Activated naive CD4-positive, alpha-beta T cell treated with anti-CD3 and anti-CD28 coated beads, Interleukin-2, amount 10 ng/mL, durations not matched to agents 7 days and 5 days (primary cell): ENCODE measurements at regions of chr1 and their contacts with region 1.

Region 1: DNA sequence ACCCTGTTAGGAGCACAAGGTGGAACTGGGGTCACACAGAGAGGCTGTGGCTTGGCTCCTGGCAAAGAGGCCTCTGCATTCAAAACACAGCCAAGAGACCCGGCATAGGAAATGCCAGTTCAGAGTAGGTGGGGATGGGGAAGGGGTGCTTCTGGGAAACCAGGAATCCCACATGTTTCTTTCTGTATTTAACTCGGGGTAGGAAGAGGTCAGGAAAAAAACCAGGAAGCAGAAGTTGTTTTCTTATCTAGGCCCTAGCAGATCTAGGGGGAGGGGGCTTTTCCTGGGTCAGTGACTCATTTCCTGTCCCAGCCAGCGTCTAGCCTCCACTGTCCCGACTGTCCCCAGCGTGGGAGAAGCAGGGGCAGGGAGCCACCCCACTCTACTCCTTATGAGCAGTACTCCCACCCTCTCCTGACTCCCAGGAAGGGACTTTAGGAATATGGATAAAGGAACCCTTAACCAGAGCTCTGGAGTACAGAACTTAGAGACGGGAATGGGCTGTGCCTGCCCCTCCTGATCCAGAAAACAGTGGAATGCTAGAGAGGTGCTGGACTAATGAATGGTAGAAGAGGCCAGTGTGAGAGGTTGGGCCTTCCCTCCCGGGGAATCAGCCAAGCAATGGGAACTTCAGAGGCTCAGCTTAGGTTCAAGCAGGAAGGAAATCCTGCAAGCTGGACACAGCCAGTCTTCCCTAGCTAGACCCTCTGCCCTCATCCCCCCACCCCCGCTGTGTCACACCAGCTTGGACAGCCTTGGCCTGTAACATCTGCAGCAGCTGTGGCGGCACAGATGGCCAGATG is 5.7 kb downstream of the FHL3 start:
- DNase-seq: no peak
- H3K4me3 Mint-ChIP-seq: no peak overlapping the region
- H3K27ac Mint-ChIP-seq: peak overlapping the region; percentile 80
- H3K4me1 Mint-ChIP-seq: peaks cover 50% of the 10 kb centered on the region
- H3K27me3 Mint-ChIP-seq: peaks cover 16% of the 10 kb centered on the region

Region 2: GRCh38 chr1:38012363-38013226 is 13.0 kb after region 1 on chr1 and contains the start of gene UTP11:
- CTCF ChIA-PET with region 1: interaction called, 17 read pairs
- DNase-seq: peak; percentile 95
- H3K4me3 Mint-ChIP-seq: peak within 1 kb of the TSS; percentile 97
- H3K27ac Mint-ChIP-seq: peak within 1 kb of the TSS; percentile 94
- H3K4me1 Mint-ChIP-seq: peaks cover 63% of the 10 kb centered on the region
- H3K27me3 Mint-ChIP-seq: no peaks in the 10 kb centered on the region

Region 3: DNA sequence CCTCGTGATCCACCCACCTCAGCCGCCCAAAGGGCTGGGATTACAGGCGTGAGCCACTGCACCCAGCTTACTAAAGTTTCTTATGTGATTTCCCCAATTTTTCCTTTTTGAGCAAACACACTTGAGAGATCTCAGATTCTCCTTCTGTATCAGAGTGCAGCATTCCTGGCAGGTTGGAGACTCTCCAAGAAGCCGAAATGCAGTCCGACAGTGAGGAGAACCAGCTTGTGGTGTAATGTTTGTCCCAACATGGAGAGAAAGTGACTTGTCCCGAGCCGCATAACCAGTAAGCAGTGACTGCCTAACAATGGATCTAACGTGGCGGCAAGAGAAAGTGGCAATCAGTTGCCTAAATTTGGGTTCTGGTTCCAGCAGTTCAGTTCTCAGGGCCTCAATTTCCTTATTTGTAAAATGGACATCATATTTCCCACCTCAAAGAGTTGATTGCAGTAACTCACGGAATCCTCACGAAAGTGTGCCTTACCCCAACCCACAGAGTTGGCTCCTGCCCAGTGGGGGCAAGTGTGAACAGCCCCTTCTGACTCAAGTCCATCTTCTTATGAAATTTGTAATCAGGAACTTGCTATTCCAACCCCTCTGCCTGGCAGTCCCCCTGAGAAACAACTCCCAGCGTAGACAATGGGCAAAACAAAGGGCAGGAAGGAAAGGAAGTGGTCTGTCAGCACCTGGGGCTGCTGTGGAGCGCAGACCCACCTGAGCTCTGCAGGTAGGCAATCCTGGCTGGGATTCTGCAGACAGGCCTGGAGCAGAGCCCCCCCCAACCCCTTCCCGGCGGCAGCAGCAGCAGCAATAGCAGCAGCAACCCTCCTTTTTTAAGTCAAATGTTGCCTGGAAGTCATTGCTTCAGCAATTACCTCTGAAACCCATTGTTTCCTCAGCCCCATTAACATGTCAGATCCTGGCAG is 270.6 kb after region 1 on chr1:
- CTCF ChIA-PET with region 1: no interaction called
- DNase-seq: no peak
- H3K4me3 Mint-ChIP-seq: no peak overlapping the region
- H3K27ac Mint-ChIP-seq: no peak overlapping the region
- H3K4me1 Mint-ChIP-seq: no peaks in the 10 kb centered on the region
- H3K27me3 Mint-ChIP-seq: peaks cover 58% of the 10 kb centered on the region